PC-9 (cell line): ENCODE measurements at regions of chr1 and their contacts with region 1.

Region 1: GRCh38 chr1:153375511-153375910 is at the start of gene S100A12:
- DNase-seq: peak; percentile 51 to 96
- H3K4me3 ChIP-seq: no peak within 1 kb of the TSS
- H3K27ac ChIP-seq: peak within 1 kb of the TSS; percentile 65
- H3K4me1 ChIP-seq: peaks cover 62% of the 10 kb centered on the region
- H3K27me3 ChIP-seq: no peaks in the 10 kb centered on the region
- CTCF ChIP-seq: no peak
- total RNA-seq, gene S100A12: not detected in 2 replicates

Region 2: GRCh38 chr1:153365303-153366095 is 10.0 kb before region 1 on chr1:
- CTCF ChIA-PET with region 1: no interaction called
- POLR2A ChIA-PET with region 1: no interaction called
- intact Hi-C with region 1: loop called (anchors 1 kb)
- DNase-seq: peak; percentile 68 to 99
- H3K4me3 ChIP-seq: peak overlapping the region; percentile 26; the same call in 1 of the 2 replicates
- H3K27ac ChIP-seq: peak overlapping the region; percentile 96
- H3K4me1 ChIP-seq: peaks cover 90% of the 10 kb centered on the region
- H3K27me3 ChIP-seq: no peaks in the 10 kb centered on the region
- CTCF ChIP-seq: peak; percentile 62